Heart right ventricle (tissue), 16 donors: ENCODE measurements at regions of chr15 and their contacts with region 1.

Region 1: DNA sequence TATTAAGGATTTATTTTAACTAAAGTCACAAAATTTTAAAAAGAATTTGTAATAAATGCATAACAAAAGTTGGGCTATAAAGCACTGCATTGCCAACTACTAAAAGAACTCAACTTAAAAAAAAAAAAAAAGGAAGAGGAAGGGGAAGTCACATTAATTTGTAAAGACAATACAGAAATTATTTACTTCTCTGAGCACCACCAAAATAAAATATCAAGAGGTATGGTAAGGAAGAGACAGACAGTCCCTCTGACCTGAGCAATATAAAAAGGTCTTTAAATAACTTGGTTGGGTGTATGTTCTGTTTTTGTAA is 83.5 kb downstream of the UACA start:
- DNase-seq: no peak
- ATAC-seq: no peak
- H3K4me3 ChIP-seq: no peak overlapping the region
- H3K27ac ChIP-seq: peak overlapping the region in 2 of 10 donors; percentile 27 to 44
- H3K4me1 ChIP-seq: peaks cover 0 to 28% (median 9%) of the 10 kb centered on the region in 9 donors
- H3K27me3 ChIP-seq: no peaks in the 10 kb centered on the region
- CTCF ChIP-seq: peak in 1 of 9 donors; percentile 19

Region 2: GRCh38 chr15:70722266-70723121 is 42.6 kb after region 1 on chr15:
- intact Hi-C with region 1: loop called in 8 of 10 experiments (anchors 5 to 10 kb)
- DNase-seq: no peak
- ATAC-seq: peak in 6 of 8 donors; percentile 16 to 54 (median 35)
- H3K4me3 ChIP-seq: no peak overlapping the region
- H3K27ac ChIP-seq: peak overlapping the region in 2 of 10 donors; percentile 9 to 57
- H3K4me1 ChIP-seq: peaks cover 0 to 71% (median 18%) of the 10 kb centered on the region in 9 donors
- H3K27me3 ChIP-seq: no peaks in the 10 kb centered on the region
- CTCF ChIP-seq: peak; percentile 62 to 86 (median 79)

Region 3: GRCh38 chr15:70763120-70763878 is 83.4 kb after region 1 on chr15 and contains the start of gene UACA:
- intact Hi-C with region 1: loop called in 3 of 10 experiments (anchors 5 to 10 kb)
- DNase-seq: peak; percentile 96 to 98
- ATAC-seq: peak; percentile 97 to 98 (median 98)
- H3K4me3 ChIP-seq: peak within 1 kb of the TSS; percentile 45 to 99 (median 86)
- H3K27ac ChIP-seq: peak within 1 kb of the TSS; percentile 91 to 100 (median 94)
- H3K4me1 ChIP-seq: peaks cover under 1 to 75% (median 67%) of the 10 kb centered on the region in 9 donors
- H3K27me3 ChIP-seq: peaks cover 0 to 42% (median 0%) of the 10 kb centered on the region in 7 donors
- CTCF ChIP-seq: peak in 5 of 9 donors; percentile 12 to 57 (median 46)
- total RNA-seq, gene UACA: 38.4 to 60.3 (median 47.1) TPM

Region 4: DNA sequence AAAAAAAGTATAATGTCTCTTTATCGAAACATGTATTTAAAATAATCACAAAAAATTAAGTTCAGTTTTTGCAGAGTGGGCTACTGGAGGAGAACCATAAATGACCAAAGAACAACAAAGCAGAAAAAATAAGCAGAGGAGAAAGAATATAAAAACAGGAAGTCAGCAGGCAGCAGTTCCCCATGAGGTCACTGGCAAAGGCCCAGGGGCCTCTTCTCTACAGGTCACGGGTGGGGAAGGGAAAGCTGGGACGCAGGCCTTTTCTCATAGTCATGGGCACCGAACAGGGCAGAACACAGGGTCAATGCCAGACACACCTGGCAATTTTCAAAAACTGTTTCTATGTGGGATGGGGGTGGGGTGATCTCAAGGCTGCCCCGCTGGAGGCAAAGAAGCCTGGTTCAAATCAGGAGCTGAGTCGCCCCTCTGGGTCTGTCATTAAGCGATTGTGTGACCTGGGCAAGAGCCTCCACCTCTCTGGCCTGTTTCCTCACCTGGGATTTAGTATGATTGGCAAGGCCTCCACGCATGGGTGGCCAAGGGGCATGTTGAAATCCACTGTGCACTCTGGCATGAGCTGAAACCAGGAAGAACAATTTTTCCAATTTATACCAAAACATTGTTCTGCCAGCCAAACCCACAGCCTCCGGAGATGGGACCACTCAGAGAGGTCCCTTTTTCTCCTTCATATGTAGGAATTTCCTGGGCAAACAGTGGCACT is 127.3 kb after region 1 on chr15:
- intact Hi-C with region 1: loop called in 9 of 10 experiments (anchors 1 to 5 kb)
- DNase-seq: peak; percentile 49 to 62
- ATAC-seq: peak in 6 of 8 donors; percentile 19 to 63 (median 55)
- H3K4me3 ChIP-seq: no peak overlapping the region
- H3K27ac ChIP-seq: peak overlapping the region in 5 of 10 donors; percentile 14 to 74 (median 50)
- H3K4me1 ChIP-seq: peaks cover 0 to 38% (median 12%) of the 10 kb centered on the region in 9 donors
- H3K27me3 ChIP-seq: no peaks in the 10 kb centered on the region
- CTCF ChIP-seq: no peak

Region 5: GRCh38 chr15:70815644-70816043 is 135.8 kb after region 1 on chr15:
- intact Hi-C with region 1: loop called (anchors 1 to 5 kb)
- DNase-seq: no peak
- ATAC-seq: no peak
- H3K4me3 ChIP-seq: no peak overlapping the region
- H3K27ac ChIP-seq: no peak overlapping the region
- H3K4me1 ChIP-seq: peaks cover 0 to 10% (median 0%) of the 10 kb centered on the region in 9 donors
- H3K27me3 ChIP-seq: no peaks in the 10 kb centered on the region
- CTCF ChIP-seq: no peak

Region 6: GRCh38 chr15:70833897-70834765 is 154.3 kb after region 1 on chr15:
- intact Hi-C with region 1: no loop called
- DNase-seq: no peak
- ATAC-seq: no peak
- H3K4me3 ChIP-seq: no peak overlapping the region
- H3K27ac ChIP-seq: peak overlapping the region in 8 of 10 donors; percentile 11 to 86 (median 70)
- H3K4me1 ChIP-seq: peaks cover 0 to 57% (median 41%) of the 10 kb centered on the region in 9 donors
- H3K27me3 ChIP-seq: no peaks in the 10 kb centered on the region
- CTCF ChIP-seq: no peak

Region 7: DNA sequence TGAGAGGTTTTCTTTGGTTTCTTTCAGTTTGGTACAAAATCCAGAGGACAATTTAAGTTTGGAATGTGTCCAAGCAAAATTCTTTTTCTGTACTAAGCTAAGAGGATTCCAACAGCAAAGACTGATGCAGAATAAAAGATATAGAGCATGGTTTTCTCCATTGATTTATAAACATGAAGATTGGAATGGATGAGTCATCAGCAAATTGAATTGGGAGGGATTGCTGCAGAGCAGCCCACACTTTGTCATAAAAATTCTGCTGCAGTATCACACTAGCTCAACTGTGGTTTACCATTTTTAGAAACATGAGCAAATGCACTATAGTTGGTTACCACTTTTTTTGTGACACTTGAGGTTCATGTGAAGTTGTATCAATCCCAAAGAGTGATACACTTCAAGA is 190.2 kb after region 1 on chr15:
- intact Hi-C with region 1: loop called in 6 of 10 experiments (anchors 5 to 10 kb)
- DNase-seq: no peak
- ATAC-seq: peak in 4 of 8 donors; percentile 27 to 46 (median 36)
- H3K4me3 ChIP-seq: no peak overlapping the region
- H3K27ac ChIP-seq: peak overlapping the region in 4 of 10 donors; percentile 3 to 71 (median 48)
- H3K4me1 ChIP-seq: peaks cover 0 to 42% (median 37%) of the 10 kb centered on the region in 9 donors
- H3K27me3 ChIP-seq: no peaks in the 10 kb centered on the region
- CTCF ChIP-seq: no peak

Region 8: DNA sequence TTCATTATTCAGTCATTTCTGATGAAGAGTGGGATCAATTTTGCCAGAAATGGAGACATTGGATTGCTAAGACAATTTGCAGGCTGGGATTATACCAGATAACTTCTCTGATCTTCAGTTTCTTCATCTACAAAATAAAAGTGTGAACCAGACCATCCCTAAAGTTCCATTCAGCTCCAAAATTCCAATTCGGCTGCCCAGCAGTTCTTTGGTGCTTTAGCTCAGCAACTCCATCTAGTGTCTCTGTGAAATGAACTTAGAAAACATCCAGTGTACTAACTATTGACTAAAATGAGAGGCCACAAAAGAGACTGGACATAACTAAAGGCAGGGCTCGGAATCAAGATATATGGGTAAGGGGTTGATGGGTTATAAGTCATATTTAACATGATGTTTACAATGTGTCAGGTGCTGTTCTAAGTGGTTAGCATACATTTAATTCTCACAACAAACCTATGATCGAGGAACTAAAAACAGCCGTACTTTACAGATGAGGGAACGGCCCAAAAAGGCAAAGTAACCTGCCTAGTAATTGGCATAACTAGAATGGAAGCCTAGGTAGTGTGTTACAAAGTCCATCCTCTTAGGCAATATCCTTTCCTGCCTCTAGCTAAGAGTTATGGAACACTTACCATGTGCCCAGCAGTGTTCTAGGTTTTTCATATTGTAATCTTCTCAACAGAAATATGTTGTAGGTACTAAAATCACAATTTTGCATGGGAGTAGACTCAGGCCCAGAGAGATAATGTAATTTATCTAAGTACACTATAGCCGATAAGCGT is 195.3 kb after region 1 on chr15:
- intact Hi-C with region 1: loop called in 6 of 10 experiments (anchors 5 to 10 kb)
- DNase-seq: peak in 1 of 2 donors; percentile 21
- ATAC-seq: peak in 7 of 8 donors; percentile 34 to 72 (median 56)
- H3K4me3 ChIP-seq: no peak overlapping the region
- H3K27ac ChIP-seq: no peak overlapping the region
- H3K4me1 ChIP-seq: peaks cover 0 to 11% (median 5%) of the 10 kb centered on the region in 9 donors
- H3K27me3 ChIP-seq: no peaks in the 10 kb centered on the region
- CTCF ChIP-seq: peak in 8 of 9 donors; percentile 45 to 77 (median 63)